ENCODE measurements at regions of chr12 and their contacts with region 1.

Region 1: GRCh38 chr12:64890873-64891468 is 66.5 kb downstream of the TBC1D30 start:
- DNase-seq: peak; percentile 50
- ATAC-seq: peak; percentile 87
- H3K4me3 ChIP-seq: no peak overlapping the region
- H3K27ac ChIP-seq: no peak overlapping the region
- H3K4me1 ChIP-seq: no peaks in the 10 kb centered on the region
- H3K27me3 ChIP-seq: peaks cover 5% of the 10 kb centered on the region; the same call in 1 of the 2 replicates
- CTCF ChIP-seq: peak; percentile 75

Region 2: DNA sequence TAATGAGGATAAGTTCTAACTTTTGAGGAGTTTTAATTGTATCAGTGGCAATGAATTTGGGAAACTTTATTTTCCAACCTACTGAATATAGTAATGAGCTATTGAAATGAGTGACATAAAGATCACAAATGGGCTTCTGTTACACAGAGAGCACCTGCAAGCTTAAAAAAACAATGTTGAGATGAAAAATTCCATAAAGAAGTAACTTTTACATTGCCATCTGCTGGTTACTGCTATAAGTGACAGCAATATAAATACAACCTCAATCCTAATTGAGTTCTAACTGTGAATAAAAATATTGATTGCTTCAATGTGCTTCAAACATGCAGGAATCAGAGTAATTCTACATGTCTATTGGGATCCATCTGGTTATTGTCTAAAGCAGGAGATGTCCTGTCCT is 216.0 kb after region 1 on chr12:
- CTCF ChIA-PET with region 1: no interaction called
- POLR2A ChIA-PET with region 1: no interaction called
- in situ Hi-C with region 1: no loop called
- intact Hi-C with region 1: loop called (anchors 5 kb)
- DNase-seq: no peak
- ATAC-seq: no peak
- H3K4me3 ChIP-seq: no peak overlapping the region
- H3K27ac ChIP-seq: no peak overlapping the region
- H3K4me1 ChIP-seq: no peaks in the 10 kb centered on the region
- H3K27me3 ChIP-seq: no peaks in the 10 kb centered on the region; the same call in none of the 2 replicates
- CTCF ChIP-seq: peak; percentile 53; the same call in 1 of the 2 replicates

Region 3: GRCh38 chr12:65123435-65124063 is 232.6 kb after region 1 on chr12:
- CTCF ChIA-PET with region 1: interaction called, 3 read pairs
- POLR2A ChIA-PET with region 1: no interaction called
- in situ Hi-C with region 1: no loop called
- intact Hi-C with region 1: loop called (anchors 2 kb)
- DNase-seq: no peak
- ATAC-seq: no peak
- H3K4me3 ChIP-seq: no peak overlapping the region
- H3K27ac ChIP-seq: no peak overlapping the region
- H3K4me1 ChIP-seq: no peaks in the 10 kb centered on the region
- H3K27me3 ChIP-seq: peaks cover 53% of the 10 kb centered on the region
- CTCF ChIP-seq: peak; percentile 81; the same call in 1 of the 2 replicates

Region 4: GRCh38 chr12:65217086-65217485 is 326.1 kb after region 1 on chr12:
- CTCF ChIA-PET with region 1: interaction called, 19 read pairs
- POLR2A ChIA-PET with region 1: no interaction called
- in situ Hi-C with region 1: no loop called
- intact Hi-C with region 1: no loop called
- DNase-seq: no peak
- ATAC-seq: no peak
- H3K4me3 ChIP-seq: no peak overlapping the region
- H3K27ac ChIP-seq: no peak overlapping the region
- H3K4me1 ChIP-seq: no peaks in the 10 kb centered on the region
- H3K27me3 ChIP-seq: no peaks in the 10 kb centered on the region
- CTCF ChIP-seq: no peak

Region 5: GRCh38 chr12:65232476-65233077 is 341.6 kb after region 1 on chr12:
- CTCF ChIA-PET with region 1: interaction called, 7 read pairs
- POLR2A ChIA-PET with region 1: no interaction called
- in situ Hi-C with region 1: no loop called
- intact Hi-C with region 1: loop called (anchors 5 kb)
- DNase-seq: no peak
- ATAC-seq: no peak
- H3K4me3 ChIP-seq: no peak overlapping the region
- H3K27ac ChIP-seq: no peak overlapping the region
- H3K4me1 ChIP-seq: no peaks in the 10 kb centered on the region
- H3K27me3 ChIP-seq: no peaks in the 10 kb centered on the region
- CTCF ChIP-seq: peak; percentile 38; the same call in 1 of the 2 replicates

Region 6: DNA sequence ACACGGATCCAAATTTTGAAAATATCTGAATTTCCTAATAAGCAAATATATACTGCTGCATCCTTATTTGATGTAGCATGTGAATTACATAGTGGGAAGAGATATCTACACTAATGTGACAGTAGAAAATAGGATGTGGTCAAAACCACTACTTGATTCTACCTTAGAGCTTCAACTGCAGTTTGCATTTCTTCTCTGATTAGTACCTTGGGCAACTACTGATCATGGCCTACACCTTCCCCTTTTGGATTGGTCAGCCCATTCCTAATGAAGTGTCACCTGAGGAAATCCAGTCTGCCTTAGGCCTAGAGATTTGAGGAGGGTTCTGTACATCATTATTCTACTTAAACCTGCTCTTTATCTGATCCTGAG is 1228.9 kb after region 1 on chr12:
- CTCF ChIA-PET with region 1: no interaction called
- POLR2A ChIA-PET with region 1: no interaction called
- in situ Hi-C with region 1: no loop called
- intact Hi-C with region 1: loop called (anchors 10 kb)
- DNase-seq: no peak
- ATAC-seq: no peak
- H3K4me3 ChIP-seq: no peak overlapping the region
- H3K27ac ChIP-seq: no peak overlapping the region
- H3K4me1 ChIP-seq: no peaks in the 10 kb centered on the region
- H3K27me3 ChIP-seq: no peaks in the 10 kb centered on the region
- CTCF ChIP-seq: no peak